CD14-positive monocyte (primary cell): ENCODE measurements at regions of chr6 and their contacts with region 1.

Region 1: GRCh38 chr6:15429141-15430110 is 183.6 kb downstream of the JARID2 start:
- DNase-seq: peak; percentile 66 to 88 (median 86)
- H3K4me3 ChIP-seq: no peak overlapping the region
- H3K4me3 Mint-ChIP-seq: no peak overlapping the region
- H3K27ac ChIP-seq: peak overlapping the region; percentile 60 to 70
- H3K27ac Mint-ChIP-seq: peak overlapping the region; percentile 86 to 94 (median 92)
- H3K4me1 ChIP-seq: peaks cover 81 to 92% of the 10 kb centered on the region in 2 donors
- H3K4me1 Mint-ChIP-seq: peaks cover 93% of the 10 kb centered on the region
- H3K27me3 ChIP-seq: no peaks in the 10 kb centered on the region
- H3K27me3 Mint-ChIP-seq: peaks cover 0 to 2% (median 0%) of the 10 kb centered on the region in 3 donors
- CTCF ChIP-seq: no peak

Region 2: GRCh38 chr6:15384901-15385300 is 44.5 kb before region 1 on chr6:
- intact Hi-C with region 1: loop called in 1 of 2 experiments (anchors 5 kb)
- DNase-seq: no peak
- H3K4me3 ChIP-seq: no peak overlapping the region
- H3K4me3 Mint-ChIP-seq: no peak overlapping the region
- H3K27ac ChIP-seq: peak overlapping the region in 1 of 2 donors; percentile 22
- H3K27ac Mint-ChIP-seq: peak overlapping the region in 3 of 7 donors; percentile 8 to 79 (median 17)
- H3K4me1 ChIP-seq: peaks cover 17 to 28% of the 10 kb centered on the region in 2 donors
- H3K4me1 Mint-ChIP-seq: peaks cover 84% of the 10 kb centered on the region
- H3K27me3 ChIP-seq: no peaks in the 10 kb centered on the region
- H3K27me3 Mint-ChIP-seq: peaks cover 0 to 3% (median 3%) of the 10 kb centered on the region in 3 donors
- CTCF ChIP-seq: no peak